ENCODE measurements at regions of chr12 and their contacts with region 1.

Region 1: DNA sequence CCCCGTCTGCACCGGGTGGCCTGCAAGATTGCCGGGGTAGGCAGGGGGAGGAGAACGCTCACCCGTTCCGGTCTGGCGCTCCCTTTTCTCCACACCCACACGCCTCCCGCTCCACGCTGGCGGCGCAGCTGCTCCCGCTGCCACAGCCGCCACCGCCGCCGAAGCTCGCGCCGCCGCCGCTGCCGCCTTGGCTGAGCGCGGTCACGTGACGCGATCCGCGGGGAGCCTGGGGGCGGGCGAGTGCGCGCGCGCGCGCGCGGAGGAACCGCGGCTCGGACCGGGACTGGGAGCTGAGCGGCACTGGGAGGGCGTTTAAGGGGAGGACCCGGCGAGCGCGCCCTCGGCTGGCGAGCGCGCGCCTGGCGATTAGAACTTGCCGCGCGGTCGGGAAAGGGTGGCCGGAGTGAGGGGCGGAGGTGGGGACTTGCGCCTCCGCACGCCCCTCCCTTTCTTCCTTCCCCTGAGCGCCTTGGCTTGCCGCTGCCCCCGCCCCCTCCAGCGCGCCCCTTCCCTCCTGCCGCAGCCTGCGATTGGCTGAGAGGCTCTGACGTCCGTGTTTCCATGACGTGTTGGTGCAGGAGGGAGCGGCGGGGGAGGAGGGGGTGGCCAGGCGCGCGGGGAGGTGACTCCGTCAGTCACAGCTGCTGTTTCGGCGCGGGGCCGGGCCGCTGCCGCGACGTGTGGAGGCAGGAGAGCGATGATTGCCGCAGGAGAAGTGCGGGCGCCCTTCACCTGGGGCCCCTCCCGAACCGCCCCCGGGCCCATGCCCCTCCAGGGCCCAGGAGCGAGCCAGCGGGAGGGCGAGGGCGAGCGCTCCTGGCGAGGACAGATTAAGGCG is 738 bp upstream of the ATP2B1 start:
- DNase-seq: peak; percentile 94
- ATAC-seq: peak; percentile 80
- H3K4me3 ChIP-seq: peak overlapping the region; percentile 84 to 95 (median 95); a peak in 5 of 6 replicates
- H3K27ac ChIP-seq: peak overlapping the region; percentile 99
- H3K4me1 ChIP-seq: peaks cover 31% of the 10 kb centered on the region
- H3K27me3 ChIP-seq: no peaks in the 10 kb centered on the region; a peak in 1 of 5 replicates
- CTCF ChIP-seq: no peak
- EP300 ChIP-seq: no peak
- POLR2A ChIP-seq: peak; percentile 71 to 80
- RAD21 ChIP-seq: no peak; the same call in 1 of the 2 replicates

Region 2: GRCh38 chr12:89621521-89621920 is 87.9 kb before region 1 on chr12:
- CTCF ChIA-PET with region 1: no interaction called
- POLR2A ChIA-PET with region 1: no interaction called
- in situ Hi-C with region 1: no loop called
- intact Hi-C with region 1: loop called (anchors 2 kb)
- DNase-seq: no peak
- ATAC-seq: no peak
- H3K4me3 ChIP-seq: no peak overlapping the region
- H3K27ac ChIP-seq: no peak overlapping the region
- H3K4me1 ChIP-seq: peaks cover 13% of the 10 kb centered on the region
- H3K27me3 ChIP-seq: no peaks in the 10 kb centered on the region
- CTCF ChIP-seq: no peak
- EP300 ChIP-seq: no peak
- POLR2A ChIP-seq: no peak
- RAD21 ChIP-seq: no peak

Region 3: DNA sequence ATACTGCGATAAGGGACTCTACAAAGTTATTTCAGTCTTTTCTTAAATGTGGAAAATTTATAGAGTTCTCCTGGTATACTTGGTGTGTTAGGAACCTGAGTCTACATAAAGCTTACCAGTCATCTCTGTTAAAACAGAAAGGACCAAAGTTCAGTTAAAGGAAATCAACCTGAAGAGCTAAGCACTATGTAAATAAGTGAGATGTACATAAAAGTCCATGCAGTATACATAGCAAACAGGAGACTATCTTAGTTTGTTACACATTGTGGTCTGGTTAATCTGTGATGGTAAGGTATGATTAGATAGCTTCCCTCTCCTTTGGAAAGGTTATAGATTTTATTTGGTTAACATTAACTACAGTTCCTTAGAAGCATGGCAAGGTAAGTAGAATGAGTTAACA is 76.6 kb before region 1 on chr12:
- CTCF ChIA-PET with region 1: no interaction called
- POLR2A ChIA-PET with region 1: interaction called, 22 read pairs
- in situ Hi-C with region 1: no loop called
- intact Hi-C with region 1: no loop called
- DNase-seq: peak; percentile 96
- ATAC-seq: peak; percentile 99
- H3K4me3 ChIP-seq: peak overlapping the region in 2 of 3 experiments; percentile 36 to 42; a peak in 3 of 6 replicates
- H3K27ac ChIP-seq: peak overlapping the region; percentile 89
- H3K4me1 ChIP-seq: peaks cover 63% of the 10 kb centered on the region
- H3K27me3 ChIP-seq: no peaks in the 10 kb centered on the region
- CTCF ChIP-seq: no peak
- EP300 ChIP-seq: peak in 1 of 2 experiments; percentile 99; a peak in 3 of 4 replicates
- POLR2A ChIP-seq: no peak
- RAD21 ChIP-seq: no peak

Region 4: DNA sequence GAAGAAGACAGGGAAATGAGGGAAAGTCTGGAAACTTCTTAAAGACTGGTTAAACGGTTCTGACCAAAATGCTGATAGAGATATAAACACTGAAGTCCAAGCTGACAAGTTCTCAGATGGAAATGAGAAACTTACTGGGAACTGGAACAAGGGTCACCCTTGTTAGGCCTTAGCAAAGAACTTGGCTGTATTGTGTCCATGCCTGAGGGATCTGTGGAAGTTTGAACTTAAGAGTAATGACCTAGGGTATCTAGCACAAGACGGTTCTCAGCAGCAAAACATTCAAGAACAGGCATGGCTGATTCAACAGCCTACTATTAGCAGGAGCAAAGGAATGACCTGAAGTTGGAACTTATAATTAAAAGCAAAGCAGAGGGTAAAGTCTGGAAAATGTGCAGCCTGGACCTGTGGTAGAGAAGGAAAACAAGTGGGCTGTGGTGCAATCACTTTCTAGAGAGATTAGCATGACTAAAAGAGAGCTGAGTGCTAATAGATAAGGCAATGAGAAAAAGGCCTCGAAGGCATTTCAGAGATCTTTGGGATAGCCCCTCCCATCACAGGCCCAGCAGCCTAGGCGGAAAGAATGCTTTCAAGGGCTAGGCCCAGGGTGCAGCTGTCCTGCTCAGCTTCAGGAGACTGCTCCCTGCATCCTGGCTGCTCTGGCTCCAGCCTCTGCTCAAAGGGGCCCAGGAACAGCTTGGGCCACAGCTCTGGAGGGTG is 61.0 kb before region 1 on chr12:
- CTCF ChIA-PET with region 1: no interaction called
- POLR2A ChIA-PET with region 1: no interaction called
- in situ Hi-C with region 1: no loop called
- intact Hi-C with region 1: loop called (anchors 5 kb)
- DNase-seq: peak; percentile 56
- ATAC-seq: peak; percentile 88
- H3K4me3 ChIP-seq: no peak overlapping the region
- H3K27ac ChIP-seq: peak overlapping the region; percentile 56
- H3K4me1 ChIP-seq: peaks cover 78% of the 10 kb centered on the region
- H3K27me3 ChIP-seq: no peaks in the 10 kb centered on the region
- CTCF ChIP-seq: no peak
- EP300 ChIP-seq: no peak; a peak in 1 of 4 replicates
- POLR2A ChIP-seq: no peak
- RAD21 ChIP-seq: no peak

Region 5: GRCh38 chr12:89999699-90000505 is 290.5 kb after region 1 on chr12:
- CTCF ChIA-PET with region 1: no interaction called
- POLR2A ChIA-PET with region 1: no interaction called
- in situ Hi-C with region 1: no loop called
- intact Hi-C with region 1: no loop called
- DNase-seq: no peak
- ATAC-seq: no peak
- H3K4me3 ChIP-seq: no peak overlapping the region
- H3K27ac ChIP-seq: no peak overlapping the region
- H3K4me1 ChIP-seq: no peaks in the 10 kb centered on the region
- H3K27me3 ChIP-seq: no peaks in the 10 kb centered on the region
- CTCF ChIP-seq: no peak
- EP300 ChIP-seq: no peak
- POLR2A ChIP-seq: no peak
- RAD21 ChIP-seq: no peak